Calu3 (cell line): ENCODE measurements at regions of chr4 and their contacts with region 1.

Region 1: DNA sequence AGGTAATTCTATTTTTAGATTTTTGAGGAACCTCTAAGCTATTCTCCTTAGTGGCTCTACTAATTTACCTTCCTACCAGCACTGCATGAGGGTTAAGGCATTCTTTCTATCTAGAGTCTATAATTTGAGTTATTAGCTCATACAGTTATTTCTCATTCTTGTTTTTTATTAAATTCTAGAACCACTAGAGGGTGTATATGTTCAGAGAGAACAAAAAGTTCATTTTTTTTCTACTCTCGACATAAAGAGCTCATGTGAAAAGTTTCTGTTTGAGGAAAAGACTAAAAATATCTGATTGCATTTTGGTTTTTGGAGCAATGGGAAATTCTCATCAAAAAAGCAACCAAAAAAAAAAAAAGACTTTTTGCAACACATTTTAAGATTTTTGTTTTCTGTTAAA is 57.0 kb upstream of the LRAT start:
- DNase-seq: no peak
- H3K4me3 Mint-ChIP-seq: no peak overlapping the region
- H3K27ac Mint-ChIP-seq: no peak overlapping the region
- H3K4me1 Mint-ChIP-seq: no peaks in the 10 kb centered on the region
- H3K27me3 Mint-ChIP-seq: no peaks in the 10 kb centered on the region
- CTCF ChIP-seq: no peak

Region 2: GRCh38 chr4:154720123-154720522 is 33.3 kb after region 1 on chr4:
- CTCF ChIA-PET with region 1: interaction called, 10 read pairs
- intact Hi-C with region 1: no loop called
- DNase-seq: no peak
- H3K4me3 Mint-ChIP-seq: no peak overlapping the region
- H3K27ac Mint-ChIP-seq: peak overlapping the region; percentile 82
- H3K4me1 Mint-ChIP-seq: peaks cover 20% of the 10 kb centered on the region
- H3K27me3 Mint-ChIP-seq: no peaks in the 10 kb centered on the region
- CTCF ChIP-seq: no peak

Region 3: DNA sequence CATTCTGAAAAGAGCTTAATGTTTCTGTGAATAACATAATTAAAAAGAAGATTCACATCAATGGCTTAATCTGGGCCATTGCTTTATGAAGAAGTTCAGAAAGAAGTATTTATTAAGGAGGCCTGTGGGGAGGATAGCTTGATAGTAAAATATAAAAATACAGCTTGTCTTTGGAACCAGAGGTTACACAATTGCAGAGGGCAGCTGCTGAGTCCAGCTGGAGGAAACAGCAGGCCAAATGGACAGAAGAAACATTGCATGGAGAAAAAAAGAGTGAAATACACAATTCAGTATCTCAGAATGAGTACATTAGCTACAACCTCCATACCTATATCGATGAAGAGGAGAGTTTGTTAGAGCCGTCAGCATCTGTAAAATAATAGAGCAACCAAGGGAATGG is 373.6 kb after region 1 on chr4:
- CTCF ChIA-PET with region 1: no interaction called
- intact Hi-C with region 1: no loop called
- DNase-seq: no peak
- H3K4me3 Mint-ChIP-seq: no peak overlapping the region
- H3K27ac Mint-ChIP-seq: no peak overlapping the region
- H3K4me1 Mint-ChIP-seq: no peaks in the 10 kb centered on the region
- H3K27me3 Mint-ChIP-seq: no peaks in the 10 kb centered on the region
- CTCF ChIP-seq: no peak